ENCODE measurements at regions of chr1 and their contacts with region 1.

Region 1: GRCh38 chr1:109112652-109113285 is 1.1 kb upstream of the ELAPOR1 start:
- DNase-seq: peak; percentile 79 to 90
- H3K4me3 ChIP-seq: no peak overlapping the region; the same call in 1 of the 2 replicates
- H3K27ac ChIP-seq: no peak overlapping the region
- H3K4me1 ChIP-seq: 0 out of 2 replicates have a peak, but pooled peaks cover 3% of the 10 kb centered on the region
- H3K27me3 ChIP-seq: no peaks in the 10 kb centered on the region
- CTCF ChIP-seq: peak; percentile 100

Region 2: DNA sequence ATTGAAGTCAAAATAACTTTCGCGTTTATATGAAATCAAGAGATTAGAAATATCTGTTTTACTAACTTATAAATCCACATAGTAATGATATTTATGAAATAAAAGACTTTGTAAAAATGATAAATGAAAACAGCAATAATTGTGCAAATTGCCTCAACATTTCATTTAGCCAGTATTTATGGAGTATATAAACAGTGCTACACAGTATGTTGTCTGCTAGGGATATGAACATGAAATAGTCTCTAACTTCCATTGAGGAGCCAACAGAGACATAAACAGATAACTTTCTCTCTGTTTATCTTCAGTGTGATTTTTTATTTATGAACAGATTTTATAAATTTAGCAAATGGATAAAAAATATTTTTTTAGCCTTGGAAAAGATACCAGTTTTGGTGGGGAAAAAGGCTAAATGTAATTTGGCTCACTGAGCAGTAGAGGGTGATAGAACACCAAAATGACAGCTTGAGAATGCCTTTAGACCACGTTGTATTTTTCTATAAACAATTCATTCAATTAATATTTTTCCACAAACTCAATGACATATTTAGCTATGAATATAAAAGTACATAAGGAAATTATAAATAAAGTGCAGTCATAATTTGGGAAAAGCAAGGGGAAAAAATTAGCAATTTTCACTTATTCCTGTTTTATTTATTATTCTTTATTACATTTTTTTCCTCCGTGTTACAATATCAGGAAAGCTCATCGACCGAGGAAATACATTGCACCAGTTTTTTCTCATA is 600.4 kb before region 1 on chr1:
- CTCF ChIA-PET with region 1: no interaction called
- POLR2A ChIA-PET with region 1: no interaction called
- intact Hi-C with region 1: loop called (anchors 2 kb)
- DNase-seq: peak in 1 of 2 experiments; percentile 53
- H3K4me3 ChIP-seq: no peak overlapping the region
- H3K27ac ChIP-seq: no peak overlapping the region
- H3K4me1 ChIP-seq: 0 out of 2 replicates have a peak, but pooled peaks cover 5% of the 10 kb centered on the region
- H3K27me3 ChIP-seq: no peaks in the 10 kb centered on the region
- CTCF ChIP-seq: peak; percentile 97

Region 3: GRCh38 chr1:108828022-108828961 is 284.5 kb before region 1 on chr1:
- CTCF ChIA-PET with region 1: no interaction called
- POLR2A ChIA-PET with region 1: no interaction called
- intact Hi-C with region 1: loop called (anchors 1 kb)
- DNase-seq: peak; percentile 60 to 64
- H3K4me3 ChIP-seq: no peak overlapping the region
- H3K27ac ChIP-seq: no peak overlapping the region
- H3K4me1 ChIP-seq: peaks cover 41% of the 10 kb centered on the region
- H3K27me3 ChIP-seq: no peaks in the 10 kb centered on the region
- CTCF ChIP-seq: peak; percentile 95

Region 4: GRCh38 chr1:108963052-108963686 is 149.6 kb before region 1 on chr1 and contains the start of gene CLCC1:
- CTCF ChIA-PET with region 1: no interaction called
- POLR2A ChIA-PET with region 1: no interaction called
- intact Hi-C with region 1: loop called (anchors 5 kb)
- DNase-seq: peak; percentile 91 to 92
- H3K4me3 ChIP-seq: peak within 1 kb of the TSS; percentile 79
- H3K27ac ChIP-seq: peak within 1 kb of the TSS; percentile 87
- H3K4me1 ChIP-seq: peaks cover 16% of the 10 kb centered on the region
- H3K27me3 ChIP-seq: no peaks in the 10 kb centered on the region
- CTCF ChIP-seq: no peak
- total RNA-seq, gene CLCC1: 23.7 and 30.1 TPM in 2 replicates

Region 5: GRCh38 chr1:109090196-109091077 is 22.3 kb before region 1 on chr1 and contains the start of gene TMEM167B:
- CTCF ChIA-PET with region 1: no interaction called
- POLR2A ChIA-PET with region 1: no interaction called
- intact Hi-C with region 1: loop called (anchors 2 kb)
- DNase-seq: peak; percentile 86 to 95
- H3K4me3 ChIP-seq: peak within 1 kb of the TSS; percentile 74
- H3K27ac ChIP-seq: peak within 1 kb of the TSS; percentile 78
- H3K4me1 ChIP-seq: peaks cover 25% of the 10 kb centered on the region
- H3K27me3 ChIP-seq: no peaks in the 10 kb centered on the region
- CTCF ChIP-seq: no peak
- total RNA-seq, gene TMEM167B: 19.2 and 23.6 TPM in 2 replicates

Region 6: DNA sequence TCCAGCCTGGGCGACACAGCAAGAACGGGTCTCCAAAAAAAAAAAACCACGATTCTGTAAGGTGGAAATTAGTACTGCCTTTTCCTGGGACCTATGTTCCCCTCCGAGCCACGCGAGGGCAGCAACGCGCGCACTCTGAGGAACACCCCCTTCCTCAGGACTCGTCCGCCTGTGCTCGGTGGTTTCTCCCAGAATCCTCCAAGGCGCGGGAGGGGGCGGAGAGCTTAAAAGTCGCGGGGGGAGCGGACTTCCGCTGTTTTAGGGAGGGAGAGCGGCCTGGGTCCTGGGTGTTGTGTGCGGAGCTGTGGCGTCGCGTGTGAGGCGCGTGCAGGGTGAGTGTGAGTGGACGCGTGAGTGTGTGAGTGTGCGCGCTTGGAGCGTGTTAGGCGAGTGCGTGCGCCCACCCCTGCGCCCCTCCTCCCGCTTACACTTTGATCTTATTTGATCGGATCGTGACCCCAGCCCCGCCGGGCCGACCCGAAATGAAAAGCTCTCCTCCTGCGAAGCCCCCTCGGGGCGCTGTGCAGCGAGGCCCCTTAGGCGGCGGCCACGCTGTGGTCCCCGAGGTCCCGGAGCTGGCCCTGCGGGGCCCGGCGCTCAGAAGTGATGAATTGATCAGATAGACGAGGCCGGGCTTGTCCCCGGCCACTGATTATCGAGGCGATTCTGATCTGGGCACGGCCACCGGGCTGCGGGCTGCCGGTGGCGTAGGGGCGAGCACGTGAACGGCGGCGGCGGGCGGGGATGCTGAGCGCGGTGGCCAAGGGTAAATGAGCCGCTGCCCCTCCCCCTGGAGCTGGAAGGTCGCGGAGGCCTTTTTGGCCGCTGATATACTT is 12.6 kb before region 1 on chr1:
- CTCF ChIA-PET with region 1: interaction called, 9 read pairs
- POLR2A ChIA-PET with region 1: interaction called, 20 read pairs
- intact Hi-C with region 1: no loop called
- DNase-seq: peak; percentile 95 to 97
- H3K4me3 ChIP-seq: peak overlapping the region; percentile 99
- H3K27ac ChIP-seq: peak overlapping the region; percentile 84
- H3K4me1 ChIP-seq: peaks cover 35% of the 10 kb centered on the region
- H3K27me3 ChIP-seq: no peaks in the 10 kb centered on the region
- CTCF ChIP-seq: peak; percentile 93

Region 7: DNA sequence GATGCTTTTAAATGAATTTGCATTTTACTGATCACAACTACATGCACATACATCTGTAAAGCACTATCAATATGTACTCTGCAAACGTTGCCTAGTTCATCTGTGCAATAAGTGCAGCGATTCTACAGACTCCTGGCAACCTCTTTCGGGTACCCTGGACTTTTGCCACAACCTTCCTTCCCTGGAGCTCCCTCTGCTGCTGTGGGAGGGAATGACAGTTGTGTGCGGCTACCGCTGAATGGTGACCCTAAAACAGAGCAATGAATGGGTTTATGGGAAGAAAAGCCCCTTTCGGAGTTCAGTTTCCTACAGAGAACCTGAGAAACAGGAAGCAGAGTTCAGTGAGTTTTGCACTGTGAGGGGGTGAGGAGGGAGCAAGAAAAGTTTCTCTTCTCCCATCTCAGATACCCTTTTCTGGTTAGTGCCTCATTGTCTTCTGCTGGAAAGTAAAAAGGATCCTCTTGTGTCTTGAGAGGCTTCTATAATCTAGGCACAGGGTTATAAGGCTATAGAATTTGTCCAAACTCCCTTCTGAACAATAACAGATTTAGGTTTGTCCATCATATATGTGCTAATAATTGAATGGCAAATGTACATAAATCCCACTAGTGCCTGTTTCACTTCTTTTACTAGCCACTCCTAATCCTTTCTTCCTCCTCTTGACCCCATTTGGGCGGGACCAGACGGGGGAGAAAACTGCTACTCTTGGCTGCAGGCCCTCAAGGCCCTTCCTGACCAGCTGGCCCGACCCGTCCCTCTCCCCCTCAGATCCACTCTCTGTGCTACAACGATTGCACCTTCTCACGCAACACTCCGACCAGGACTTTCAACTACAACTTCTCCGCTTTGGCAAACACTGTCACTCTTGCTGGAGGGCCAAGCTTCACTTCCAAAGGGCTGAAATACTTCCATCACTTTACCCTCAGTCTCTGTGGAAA is 81.2 kb after region 1 on chr1:
- CTCF ChIA-PET with region 1: interaction called, 6 read pairs
- POLR2A ChIA-PET with region 1: no interaction called
- intact Hi-C with region 1: loop called (anchors 2 kb)
- DNase-seq: peak in 1 of 2 experiments; percentile 61
- H3K4me3 ChIP-seq: no peak overlapping the region
- H3K27ac ChIP-seq: no peak overlapping the region
- H3K4me1 ChIP-seq: peaks cover 24% of the 10 kb centered on the region
- H3K27me3 ChIP-seq: no peaks in the 10 kb centered on the region
- CTCF ChIP-seq: peak; percentile 93

Measured in PC-9 (cell line).